Mucosa of descending colon (tissue), 3 donors: ENCODE measurements at regions of chr1 and their contacts with region 1.

Region 1: GRCh38 chr1:221435504-221435904 is 306.4 kb downstream of the DUSP10 start:
- DNase-seq: no peak
- ATAC-seq: peak; percentile 60
- H3K4me3 ChIP-seq: no peak overlapping the region
- H3K4me1 ChIP-seq: no peaks in the 10 kb centered on the region
- CTCF ChIP-seq: peak; percentile 82

Region 2: GRCh38 chr1:220879076-220879508 is 556.4 kb before region 1 on chr1 and contains the start of gene HLX:
- intact Hi-C with region 1: loop called in 1 of 2 experiments (anchors 10 kb)
- DNase-seq: peak; percentile 77 to 90 (median 78)
- ATAC-seq: peak; percentile 75
- H3K4me3 ChIP-seq: peak within 1 kb of the TSS; percentile 20
- H3K4me1 ChIP-seq: peaks cover 15% of the 10 kb centered on the region
- CTCF ChIP-seq: no peak
- total RNA-seq, gene HLX: 2.6 to 43.4 (median 6.2) TPM

Region 3: DNA sequence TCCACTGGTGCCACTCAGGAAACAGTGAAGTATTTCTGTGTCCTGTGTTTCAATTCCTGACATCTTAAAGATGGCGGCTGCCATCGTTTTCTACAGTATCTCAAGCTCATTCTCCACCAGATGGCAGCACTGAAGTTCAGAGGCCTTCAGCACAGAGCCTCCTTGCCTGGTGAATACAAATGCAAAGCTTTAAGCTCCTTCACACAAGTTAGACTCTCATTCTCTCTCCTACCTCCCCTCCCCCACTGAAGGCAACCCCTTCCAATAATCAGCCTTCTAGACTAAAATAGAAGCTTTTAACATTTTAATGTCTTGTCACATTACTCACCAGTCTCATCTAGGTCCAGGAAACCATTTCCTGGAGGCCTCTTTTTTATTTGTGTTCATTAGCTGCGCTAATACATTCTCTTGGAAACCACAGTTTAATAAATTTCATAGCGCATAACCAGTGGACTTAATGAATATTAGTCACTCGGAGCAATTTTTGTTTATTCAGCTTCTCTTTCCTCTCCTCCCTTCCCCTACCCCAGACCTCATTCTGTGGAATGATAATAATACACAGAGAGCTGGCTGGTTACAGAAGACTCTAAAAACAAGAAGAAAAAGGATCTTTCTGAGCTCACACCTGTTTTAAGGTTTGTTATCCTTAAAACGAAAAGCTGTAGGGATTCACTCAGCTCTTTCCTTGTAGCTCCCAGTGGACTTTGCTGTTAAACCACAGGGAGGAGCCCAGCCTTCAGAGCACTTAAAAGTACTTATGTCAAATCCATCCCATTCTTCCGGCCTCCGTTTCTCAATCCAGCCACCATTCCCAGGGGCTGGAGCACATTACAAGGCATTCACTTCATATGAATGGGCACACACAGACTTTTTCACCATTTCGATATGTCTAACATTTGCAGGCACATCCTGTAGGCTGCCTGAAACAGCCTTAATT is 171.4 kb before region 1 on chr1:
- intact Hi-C with region 1: loop called in 1 of 2 experiments (anchors 10 kb)
- DNase-seq: peak in 1 of 3 donors; percentile 69
- ATAC-seq: peak; percentile 28
- H3K4me3 ChIP-seq: no peak overlapping the region
- H3K4me1 ChIP-seq: peaks cover 2% of the 10 kb centered on the region
- CTCF ChIP-seq: no peak

Region 4: DNA sequence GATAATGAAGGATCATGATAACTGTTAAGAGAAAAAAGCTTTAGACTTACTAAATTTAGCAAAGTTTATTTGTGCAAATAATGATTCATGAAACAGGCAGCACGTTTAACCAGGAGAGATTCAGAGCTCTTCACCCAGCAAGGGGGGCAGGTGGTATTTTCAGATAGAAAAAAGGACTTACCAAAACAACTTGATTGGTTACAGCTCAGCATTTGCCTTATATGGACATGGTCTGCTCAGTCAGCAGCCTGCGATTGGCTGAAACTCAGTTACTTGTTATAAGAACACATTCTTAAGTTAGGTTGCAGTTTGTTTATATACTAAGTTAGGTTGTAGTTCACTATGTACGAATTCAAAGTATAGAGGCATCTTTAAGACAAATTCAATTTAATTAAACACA is 140.8 kb after region 1 on chr1:
- intact Hi-C with region 1: no loop called
- DNase-seq: no peak
- ATAC-seq: no peak
- H3K4me3 ChIP-seq: no peak overlapping the region
- H3K4me1 ChIP-seq: no peaks in the 10 kb centered on the region
- CTCF ChIP-seq: no peak

Region 5: GRCh38 chr1:221655766-221656305 is 220.3 kb after region 1 on chr1:
- intact Hi-C with region 1: no loop called
- DNase-seq: no peak
- ATAC-seq: no peak
- H3K4me3 ChIP-seq: no peak overlapping the region
- H3K4me1 ChIP-seq: no peaks in the 10 kb centered on the region
- CTCF ChIP-seq: no peak